Common myeloid progenitor, CD34-positive (primary cell): ENCODE measurements at regions of chr12 and their contacts with region 1.

Region 1: DNA sequence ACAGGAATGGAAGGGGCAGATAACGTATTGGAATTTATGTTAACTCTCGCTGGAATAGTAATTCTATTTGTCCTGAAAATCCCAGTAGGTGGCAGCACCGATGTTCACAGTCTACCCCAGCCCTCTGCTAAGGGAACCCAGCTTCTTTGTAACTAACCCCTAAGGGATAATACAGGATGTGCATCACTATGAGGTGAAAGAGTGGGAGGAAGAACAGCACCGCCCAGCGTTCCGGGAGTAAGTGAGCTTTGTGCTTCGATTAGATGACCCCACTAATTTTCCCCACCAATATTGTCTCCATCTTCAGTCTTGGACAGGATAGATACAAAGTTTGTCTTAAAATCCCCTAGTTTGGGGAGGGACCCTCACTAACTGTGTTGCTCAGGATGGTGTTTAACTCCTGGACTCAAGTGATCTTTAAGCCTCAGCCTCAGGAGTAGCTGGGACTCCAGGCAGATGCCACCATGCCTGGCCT is 2.7 kb downstream of the SLC2A3 start:
- DNase-seq: peak; percentile 93 to 95 (median 93)
- H3K4me3 ChIP-seq: peak overlapping the region in 6 of 7 experiments; percentile 19 to 98 (median 74)
- H3K27ac ChIP-seq: peak overlapping the region in 1 of 2 experiments; percentile 85
- H3K4me1 ChIP-seq: peaks cover 16 to 45% (median 35%) of the 10 kb centered on the region in 4 experiments
- H3K27me3 ChIP-seq: no peaks in the 10 kb centered on the region

Region 2: GRCh38 chr12:7959701-7960121 is 26.4 kb after region 1 on chr12:
- CTCF ChIA-PET with region 1: interaction called, 242 read pairs
- POLR2A ChIA-PET with region 1: interaction called, 26 read pairs
- DNase-seq: peak; percentile 64 to 90 (median 86)
- H3K4me3 ChIP-seq: peak overlapping the region in 6 of 7 experiments; percentile 48 to 81 (median 66)
- H3K27ac ChIP-seq: peak overlapping the region in 1 of 2 experiments; percentile 77
- H3K4me1 ChIP-seq: peaks cover 26 to 60% (median 49%) of the 10 kb centered on the region in 4 experiments
- H3K27me3 ChIP-seq: no peaks in the 10 kb centered on the region

Region 3: GRCh38 chr12:7989827-7990551 is 56.7 kb after region 1 on chr12:
- CTCF ChIA-PET with region 1: interaction called, 63 read pairs
- POLR2A ChIA-PET with region 1: interaction called, 13 read pairs
- DNase-seq: peak; percentile 84 to 97 (median 95)
- H3K4me3 ChIP-seq: peak overlapping the region in 5 of 7 experiments; percentile 0 to 62 (median 33)
- H3K27ac ChIP-seq: peak overlapping the region in 1 of 2 experiments; percentile 54
- H3K4me1 ChIP-seq: peaks cover 12 to 41% (median 27%) of the 10 kb centered on the region in 4 experiments
- H3K27me3 ChIP-seq: no peaks in the 10 kb centered on the region

Region 4: DNA sequence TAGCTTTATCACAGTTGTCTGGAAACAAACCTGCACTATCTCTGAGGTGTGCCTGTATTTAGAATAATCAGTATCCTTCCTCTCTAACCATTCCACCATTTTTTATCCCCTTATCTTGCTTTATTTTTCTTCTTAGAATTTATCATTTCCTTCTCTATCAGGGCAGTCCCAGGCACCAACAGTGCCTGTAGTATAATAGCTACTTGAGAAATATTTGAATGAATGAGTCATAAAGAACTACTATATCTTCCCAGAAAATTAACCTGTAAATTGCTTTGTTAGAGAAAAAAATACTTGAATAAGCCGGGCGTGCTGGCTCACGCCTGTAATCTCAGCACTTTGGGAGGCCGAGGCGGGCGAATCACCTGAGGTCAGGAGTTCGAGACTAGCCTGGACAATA is 78.0 kb after region 1 on chr12:
- CTCF ChIA-PET with region 1: interaction called, 10 read pairs
- POLR2A ChIA-PET with region 1: no interaction called
- DNase-seq: no peak
- H3K4me3 ChIP-seq: no peak overlapping the region
- H3K27ac ChIP-seq: no peak overlapping the region
- H3K4me1 ChIP-seq: no peaks in the 10 kb centered on the region
- H3K27me3 ChIP-seq: no peaks in the 10 kb centered on the region